Ascending aorta (tissue), 2 donors: ENCODE measurements at regions of chr2 and their contacts with region 1.

Region 1: GRCh38 chr2:130797493-130798435 is 39.0 kb upstream of the ARHGEF4 start:
- DNase-seq: peak; percentile 39 to 93
- H3K4me3 ChIP-seq: peak overlapping the region; percentile 59 to 70
- H3K27ac ChIP-seq: peak overlapping the region; percentile 88 to 90
- H3K4me1 ChIP-seq: peaks cover 0 to 8% of the 10 kb centered on the region in 2 donors
- H3K27me3 ChIP-seq: no peaks in the 10 kb centered on the region
- CTCF ChIP-seq: peak; percentile 86 to 96 (median 95)

Region 2: DNA sequence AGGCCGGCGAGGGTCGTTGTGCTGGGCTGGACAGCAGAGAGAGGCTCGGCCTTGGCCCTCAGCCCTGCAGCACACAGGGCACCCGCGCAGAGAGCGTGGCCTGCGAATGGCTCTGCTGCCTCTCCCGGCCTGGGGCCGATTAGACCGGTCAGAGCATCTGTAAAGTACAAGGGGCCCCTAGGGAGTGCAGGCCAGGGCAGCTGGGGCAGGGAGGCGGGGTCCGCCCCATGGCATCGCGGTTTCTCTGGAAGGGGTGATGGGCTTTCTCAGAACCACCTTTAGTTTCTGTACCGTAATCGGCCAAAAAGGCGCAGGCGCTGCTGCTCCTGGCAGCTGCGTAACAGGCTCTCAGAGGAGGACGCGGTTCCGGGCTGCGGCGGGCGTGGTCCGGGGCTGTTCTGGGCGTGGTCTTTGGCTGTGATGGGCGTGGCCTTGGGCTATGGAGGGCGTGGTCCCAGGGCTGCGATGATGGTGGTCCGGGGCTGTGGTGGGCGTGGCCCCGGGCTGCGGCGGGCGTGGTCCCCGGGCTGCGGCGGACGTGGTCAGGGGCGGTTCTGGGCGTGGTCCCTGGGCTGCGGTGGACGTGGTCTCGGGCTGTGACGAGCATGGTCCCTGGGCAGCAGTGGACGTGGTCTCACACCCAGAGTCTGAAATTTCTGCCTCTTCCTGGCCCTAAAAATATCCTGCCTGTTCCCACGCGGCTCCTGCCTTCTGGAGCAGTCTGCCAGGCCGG is 70.3 kb before region 1 on chr2:
- intact Hi-C with region 1: loop called (anchors 5 kb)
- DNase-seq: peak; percentile 46 to 91
- H3K4me3 ChIP-seq: peak overlapping the region; percentile 64 to 67
- H3K27ac ChIP-seq: peak overlapping the region; percentile 73 to 86
- H3K4me1 ChIP-seq: peaks cover 7 to 15% of the 10 kb centered on the region in 2 donors
- H3K27me3 ChIP-seq: no peaks in the 10 kb centered on the region
- CTCF ChIP-seq: no peak

Region 3: DNA sequence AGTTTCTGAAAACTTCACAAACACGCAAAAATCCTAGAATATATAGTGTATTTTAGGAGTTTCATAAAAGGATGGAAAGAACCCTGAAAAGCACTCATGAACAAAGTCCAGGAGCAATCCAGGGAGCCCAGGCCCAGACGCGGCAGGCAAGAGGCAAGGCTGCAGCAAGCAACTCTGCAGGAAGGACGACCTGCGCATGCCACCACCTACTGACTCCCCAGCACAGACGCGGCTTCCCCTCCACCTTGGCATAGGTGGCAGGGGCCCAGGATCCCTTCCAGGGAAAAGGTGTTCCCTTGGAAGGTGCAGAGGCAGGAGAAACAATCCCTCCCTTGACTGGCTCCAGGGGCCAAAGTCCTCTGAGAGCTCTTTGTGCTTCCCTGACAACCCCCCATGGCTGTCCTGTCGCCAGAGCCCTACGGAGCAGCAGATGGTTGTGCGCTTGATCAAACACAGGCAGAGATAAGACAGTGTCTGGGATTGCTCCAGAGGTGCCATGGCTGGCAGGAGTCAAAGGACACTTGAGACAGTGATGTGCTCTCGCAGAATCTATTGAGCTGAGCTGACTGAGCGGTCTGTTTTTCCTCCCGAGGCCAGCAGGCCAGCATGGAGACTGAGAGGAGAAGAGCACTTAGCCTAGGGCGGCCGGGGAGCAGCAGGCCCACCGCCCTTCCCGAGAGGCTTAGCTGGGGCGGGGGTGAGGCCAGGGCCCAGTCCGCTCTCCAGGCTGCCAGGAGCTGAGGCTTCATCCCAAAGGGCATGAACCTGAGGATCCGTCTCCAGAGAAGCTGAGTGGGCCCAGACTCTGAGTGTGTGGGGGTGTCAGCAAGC is 53.3 kb before region 1 on chr2:
- intact Hi-C with region 1: no loop called
- DNase-seq: no peak
- H3K4me3 ChIP-seq: no peak overlapping the region
- H3K27ac ChIP-seq: no peak overlapping the region
- H3K4me1 ChIP-seq: no peaks in the 10 kb centered on the region
- H3K27me3 ChIP-seq: no peaks in the 10 kb centered on the region
- CTCF ChIP-seq: no peak

Region 4: GRCh38 chr2:130819603-130820278 is 22.0 kb after region 1 on chr2:
- intact Hi-C with region 1: loop called (anchors 2 kb)
- DNase-seq: no peak
- H3K4me3 ChIP-seq: peak overlapping the region in 1 of 2 donors; percentile 60
- H3K27ac ChIP-seq: peak overlapping the region; percentile 92 to 96
- H3K4me1 ChIP-seq: peaks cover 10 to 11% of the 10 kb centered on the region in 2 donors
- H3K27me3 ChIP-seq: no peaks in the 10 kb centered on the region
- CTCF ChIP-seq: no peak

Region 5: DNA sequence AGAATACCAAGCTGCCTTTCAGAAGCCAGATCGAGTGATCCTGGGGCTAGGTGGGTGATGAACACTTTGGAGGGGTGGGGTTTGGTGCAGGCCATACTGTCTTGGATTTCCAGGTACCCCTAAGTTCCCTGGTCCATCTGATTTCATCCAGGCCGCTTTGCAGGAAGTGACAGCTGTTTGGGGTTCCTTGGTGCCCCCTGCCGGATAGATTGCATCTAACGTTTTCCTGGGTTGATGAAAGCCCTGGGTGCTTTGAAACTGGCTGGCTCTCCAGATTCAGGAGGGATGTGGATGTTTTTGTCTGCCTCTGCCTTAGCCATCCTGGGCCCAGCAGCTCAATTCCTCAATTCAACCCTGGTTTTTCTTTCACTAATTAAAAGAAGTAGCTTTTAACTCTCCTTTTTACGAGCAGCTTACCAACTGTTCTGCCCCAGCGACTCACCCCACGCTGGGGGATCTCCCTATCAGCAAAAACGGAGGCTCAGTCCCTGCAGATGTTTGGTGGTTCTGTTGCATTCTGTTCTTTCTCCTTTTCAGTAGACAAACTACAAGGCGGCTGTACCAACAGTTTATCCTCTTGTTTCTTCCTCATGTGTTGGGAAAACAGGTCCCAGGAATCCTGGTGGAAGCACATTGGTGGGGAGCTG is 76.1 kb after region 1 on chr2:
- intact Hi-C with region 1: loop called (anchors 1 kb)
- DNase-seq: peak in 1 of 2 donors; percentile 82
- H3K4me3 ChIP-seq: no peak overlapping the region
- H3K27ac ChIP-seq: no peak overlapping the region
- H3K4me1 ChIP-seq: no peaks in the 10 kb centered on the region
- H3K27me3 ChIP-seq: no peaks in the 10 kb centered on the region
- CTCF ChIP-seq: peak; percentile 34 to 71 (median 71)

Region 6: DNA sequence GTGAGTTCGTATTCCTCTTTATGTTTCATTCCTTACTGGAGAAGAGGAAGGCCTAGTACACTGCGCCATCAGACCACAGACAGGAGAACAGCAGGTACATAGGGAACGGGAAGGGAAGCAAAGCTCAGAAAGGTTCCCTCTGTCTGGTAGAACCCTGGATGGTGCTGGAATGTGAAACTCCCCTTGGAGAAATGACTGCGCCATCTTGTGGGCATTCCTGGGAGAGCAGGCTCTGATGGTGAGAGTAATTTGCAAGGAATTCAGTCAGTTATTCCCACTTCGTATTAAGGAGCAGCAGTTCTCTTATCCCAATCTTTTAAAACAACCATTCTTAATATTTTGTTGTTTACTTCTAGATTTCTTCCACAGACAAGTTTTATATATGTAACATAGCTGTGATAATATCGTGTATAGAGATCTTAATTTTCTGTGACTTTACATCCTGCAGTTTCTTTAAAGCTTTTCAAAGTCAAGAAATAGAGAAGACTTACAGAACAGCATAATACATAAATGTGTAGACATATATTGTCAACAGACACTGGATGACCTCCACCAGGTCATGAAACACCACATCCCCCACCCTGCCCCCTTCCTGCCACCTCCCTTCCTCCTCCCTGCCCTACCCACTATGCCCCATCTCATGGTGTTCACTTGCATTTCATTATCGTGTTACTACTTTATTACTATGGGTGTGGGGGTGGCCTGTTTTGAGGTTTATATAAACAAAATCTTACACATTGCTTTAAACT is 122.8 kb after region 1 on chr2:
- intact Hi-C with region 1: loop called (anchors 1 kb)
- DNase-seq: peak in 1 of 2 donors; percentile 72
- H3K4me3 ChIP-seq: no peak overlapping the region
- H3K27ac ChIP-seq: no peak overlapping the region
- H3K4me1 ChIP-seq: no peaks in the 10 kb centered on the region
- H3K27me3 ChIP-seq: no peaks in the 10 kb centered on the region
- CTCF ChIP-seq: peak in 2 of 3 experiments; percentile 55 to 68

Region 7: DNA sequence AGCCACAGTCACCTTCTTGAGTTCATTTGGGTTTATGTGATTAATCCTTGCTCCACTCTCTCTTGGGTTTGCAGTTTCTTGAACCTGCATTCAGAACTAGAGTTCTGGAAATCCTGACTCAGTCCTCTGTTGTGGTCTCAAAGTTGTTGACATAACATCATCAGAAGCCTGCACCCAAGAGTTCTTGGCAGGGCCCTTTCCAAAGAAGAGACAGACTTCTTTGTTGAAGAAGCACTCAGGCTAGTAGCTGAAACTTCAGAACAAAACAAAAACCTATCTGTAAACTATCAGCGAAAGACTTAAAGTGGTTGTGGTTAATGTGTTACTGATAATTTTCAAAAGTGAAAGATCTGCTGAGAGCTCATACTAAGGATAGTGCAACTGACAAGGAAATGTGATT is 174.6 kb after region 1 on chr2:
- intact Hi-C with region 1: no loop called
- DNase-seq: no peak
- H3K4me3 ChIP-seq: no peak overlapping the region
- H3K27ac ChIP-seq: no peak overlapping the region
- H3K4me1 ChIP-seq: no peaks in the 10 kb centered on the region
- H3K27me3 ChIP-seq: no peaks in the 10 kb centered on the region
- CTCF ChIP-seq: no peak

Region 8: DNA sequence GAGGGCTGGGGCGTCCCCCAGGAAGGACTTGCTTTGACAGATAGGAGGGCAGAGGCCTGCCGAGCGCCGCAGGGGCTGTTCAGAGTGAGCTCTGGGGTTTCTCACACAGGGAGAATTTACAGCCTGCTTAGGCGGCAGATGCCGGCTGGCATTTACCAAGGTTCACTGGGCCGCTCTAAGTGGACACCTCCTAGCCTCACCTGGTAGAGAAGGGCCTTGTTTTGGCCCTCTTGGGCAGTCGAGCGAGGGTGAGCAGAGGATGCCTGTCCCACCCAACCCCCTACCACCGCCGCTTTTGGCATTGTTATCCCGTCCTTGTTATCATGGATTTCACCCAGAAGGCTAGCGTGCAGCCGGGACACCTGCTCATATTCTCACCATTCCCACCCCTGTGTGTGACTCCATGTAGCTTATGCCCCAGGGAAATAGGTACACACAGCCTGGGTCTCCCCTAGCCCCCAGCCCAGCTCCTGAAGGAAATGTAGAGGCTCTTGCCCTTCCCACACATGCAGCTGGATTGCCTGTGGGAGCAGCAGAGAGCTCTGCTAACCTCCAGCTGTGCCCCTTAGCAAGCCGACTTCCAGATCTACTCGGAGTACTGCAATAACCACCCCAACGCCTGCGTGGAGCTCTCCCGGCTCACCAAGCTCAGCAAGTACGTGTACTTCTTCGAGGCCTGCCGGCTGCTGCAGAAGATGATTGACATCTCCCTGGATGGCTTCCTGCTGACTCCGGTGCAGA is 243.1 kb after region 1 on chr2:
- intact Hi-C with region 1: no loop called
- DNase-seq: peak; percentile 4 to 48
- H3K4me3 ChIP-seq: no peak overlapping the region
- H3K27ac ChIP-seq: no peak overlapping the region
- H3K4me1 ChIP-seq: no peaks in the 10 kb centered on the region
- H3K27me3 ChIP-seq: no peaks in the 10 kb centered on the region
- CTCF ChIP-seq: no peak